Dendritic cell treated with granulocyte-macrophage colony-stimulating factor and Interleukin-4, amounts not matched to agents 40 ng/mL and 50 ng/mL, for 4 days (primary cell): ENCODE measurements at regions of chr13 and their contacts with region 1.

Region 1: DNA sequence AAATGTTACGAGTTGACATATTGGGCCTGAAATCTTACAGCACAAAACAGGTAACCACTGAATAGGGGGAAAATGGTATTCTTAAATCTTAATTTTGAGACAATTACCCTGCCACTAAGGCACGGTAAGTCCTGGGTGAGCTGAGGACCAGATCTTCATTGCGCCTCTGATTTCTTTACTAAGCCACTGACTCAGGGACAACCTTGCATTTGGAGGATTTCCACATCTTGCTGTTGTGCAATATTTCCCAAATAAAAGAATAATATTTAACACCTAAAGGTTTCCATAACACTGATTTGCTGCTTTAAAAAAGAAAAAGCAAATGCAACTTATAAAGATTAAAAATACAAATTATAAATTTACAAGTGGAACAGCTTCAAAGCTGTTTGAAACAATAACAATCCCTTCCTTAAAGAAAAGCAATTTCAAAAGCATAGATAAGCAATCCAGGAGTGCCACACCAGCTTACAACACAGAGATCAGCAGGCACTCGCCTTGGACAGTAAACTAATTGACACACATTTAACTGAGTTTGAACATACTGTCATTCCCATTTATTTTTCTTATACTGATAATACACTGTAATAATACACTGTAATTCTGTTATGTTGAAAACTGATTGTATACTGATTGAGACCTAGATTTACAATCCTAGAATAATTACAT is 79.6 kb upstream of the DOCK9 start:
- H3K4me3 Mint-ChIP-seq: no peak overlapping the region
- H3K27ac Mint-ChIP-seq: no peak overlapping the region
- H3K4me1 Mint-ChIP-seq: peaks cover 5% of the 10 kb centered on the region
- H3K27me3 Mint-ChIP-seq: peaks cover 75% of the 10 kb centered on the region

Region 2: DNA sequence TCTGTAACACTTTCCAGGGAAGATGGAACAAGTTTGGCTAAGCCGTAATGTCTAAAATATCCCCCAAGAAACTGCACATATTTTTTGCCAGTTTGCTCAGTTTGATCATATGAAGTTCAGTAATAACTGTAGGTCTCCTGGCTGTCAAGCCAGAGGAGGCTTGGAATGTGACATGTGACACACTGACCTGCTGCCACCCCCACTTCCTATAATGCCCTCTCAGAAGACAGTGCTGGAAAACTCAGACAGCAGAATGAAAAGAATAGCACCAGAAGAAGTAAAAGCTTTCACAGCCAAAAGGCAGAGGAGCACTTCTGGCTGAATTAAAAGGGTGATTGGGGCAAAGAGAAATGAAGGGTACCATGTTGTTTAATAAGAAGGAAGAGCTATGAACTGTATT is 75.8 kb after region 1 on chr13:
- intact Hi-C with region 1: loop called (anchors 10 kb)
- H3K4me3 Mint-ChIP-seq: no peak overlapping the region
- H3K27ac Mint-ChIP-seq: no peak overlapping the region
- H3K4me1 Mint-ChIP-seq: no peaks in the 10 kb centered on the region
- H3K27me3 Mint-ChIP-seq: peaks cover 99% of the 10 kb centered on the region